Activated CD4-positive, alpha-beta T cell treated with anti-CD3 and anti-CD28 coated beads, Interleukin-2, amount 10 ng/mL, durations not matched to agents 24 days and 14 days (primary cell): ENCODE measurements at regions of chr1 and their contacts with region 1.

Region 1: DNA sequence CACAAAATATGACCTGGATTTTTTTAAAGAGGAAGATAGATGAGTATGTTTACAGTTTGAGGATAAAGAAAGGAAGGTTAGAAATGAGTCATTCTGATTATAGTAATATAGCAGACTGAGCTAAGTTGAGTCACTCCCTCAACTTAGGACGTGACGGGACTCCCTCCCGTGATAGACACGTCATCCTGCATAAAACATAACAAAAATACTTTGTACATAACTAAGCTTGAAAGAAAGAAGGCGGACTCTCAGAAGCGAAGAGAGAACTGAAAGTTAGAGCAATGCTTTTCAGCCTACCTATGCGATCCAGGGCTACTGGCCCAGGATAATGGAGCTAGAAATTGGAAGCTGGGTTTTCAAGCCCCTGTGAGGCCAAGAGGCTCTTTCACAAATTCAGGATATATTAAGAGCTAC is 53.0 kb upstream of the DESI2 start:
- DNase-seq: peak; percentile 83
- H3K4me3 Mint-ChIP-seq: peak overlapping the region; percentile 70
- H3K27ac Mint-ChIP-seq: peak overlapping the region; percentile 92
- H3K4me1 Mint-ChIP-seq: peaks cover 20% of the 10 kb centered on the region
- H3K27me3 Mint-ChIP-seq: peaks cover 3% of the 10 kb centered on the region

Region 2: DNA sequence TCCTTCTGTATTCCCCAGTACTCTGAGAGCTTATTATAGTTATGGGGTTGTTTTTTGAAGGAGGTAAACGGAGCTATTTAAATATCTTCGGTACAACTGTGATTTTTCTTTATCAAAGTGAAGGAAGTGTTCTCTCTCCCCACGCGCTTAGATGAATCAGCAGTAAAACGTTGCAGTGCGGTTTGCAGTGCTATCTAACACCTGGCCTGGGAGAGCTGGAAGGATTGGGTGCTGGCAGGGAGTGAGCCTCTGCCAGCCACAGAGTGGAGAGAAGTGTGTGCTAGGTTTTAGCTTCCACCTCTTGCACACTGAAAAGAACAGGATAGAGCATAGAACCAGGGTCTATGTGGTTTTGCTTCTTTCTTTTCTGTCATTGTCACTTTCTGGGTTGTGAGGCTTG is 1178.2 kb before region 1 on chr1:
- intact Hi-C with region 1: loop called (anchors 2 kb)
- DNase-seq: peak; percentile 89
- H3K4me3 Mint-ChIP-seq: peak overlapping the region; percentile 70
- H3K27ac Mint-ChIP-seq: peak overlapping the region; percentile 55
- H3K4me1 Mint-ChIP-seq: peaks cover 38% of the 10 kb centered on the region
- H3K27me3 Mint-ChIP-seq: no peaks in the 10 kb centered on the region

Region 3: GRCh38 chr1:244451951-244452795 is 147.8 kb before region 1 on chr1:
- intact Hi-C with region 1: loop called (anchors 5 kb)
- DNase-seq: peak; percentile 100
- H3K4me3 Mint-ChIP-seq: peak overlapping the region; percentile 92
- H3K27ac Mint-ChIP-seq: peak overlapping the region; percentile 96
- H3K4me1 Mint-ChIP-seq: peaks cover 29% of the 10 kb centered on the region
- H3K27me3 Mint-ChIP-seq: no peaks in the 10 kb centered on the region

Region 4: DNA sequence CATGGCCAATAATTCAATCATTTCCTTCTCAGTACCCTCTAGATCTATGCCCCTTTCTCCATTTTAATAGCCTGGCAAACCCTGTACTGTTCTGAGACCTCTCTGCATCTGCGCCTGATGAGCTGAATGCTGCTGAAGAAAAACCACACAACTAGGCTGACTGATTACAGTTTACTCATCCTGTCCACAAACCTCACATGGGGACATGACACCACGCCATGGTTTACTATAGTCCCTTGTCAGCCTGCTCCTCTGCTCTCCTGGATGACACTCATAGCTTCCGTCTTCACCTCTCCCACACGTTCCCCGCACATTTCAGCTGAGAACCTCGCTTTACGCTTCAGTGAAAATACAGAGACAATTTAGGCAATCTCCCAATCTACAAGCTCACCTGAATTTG is 112.7 kb after region 1 on chr1:
- intact Hi-C with region 1: loop called (anchors 5 kb)
- DNase-seq: no peak
- H3K4me3 Mint-ChIP-seq: no peak overlapping the region
- H3K27ac Mint-ChIP-seq: no peak overlapping the region
- H3K4me1 Mint-ChIP-seq: peaks cover 8% of the 10 kb centered on the region
- H3K27me3 Mint-ChIP-seq: peaks cover 3% of the 10 kb centered on the region

Region 5: DNA sequence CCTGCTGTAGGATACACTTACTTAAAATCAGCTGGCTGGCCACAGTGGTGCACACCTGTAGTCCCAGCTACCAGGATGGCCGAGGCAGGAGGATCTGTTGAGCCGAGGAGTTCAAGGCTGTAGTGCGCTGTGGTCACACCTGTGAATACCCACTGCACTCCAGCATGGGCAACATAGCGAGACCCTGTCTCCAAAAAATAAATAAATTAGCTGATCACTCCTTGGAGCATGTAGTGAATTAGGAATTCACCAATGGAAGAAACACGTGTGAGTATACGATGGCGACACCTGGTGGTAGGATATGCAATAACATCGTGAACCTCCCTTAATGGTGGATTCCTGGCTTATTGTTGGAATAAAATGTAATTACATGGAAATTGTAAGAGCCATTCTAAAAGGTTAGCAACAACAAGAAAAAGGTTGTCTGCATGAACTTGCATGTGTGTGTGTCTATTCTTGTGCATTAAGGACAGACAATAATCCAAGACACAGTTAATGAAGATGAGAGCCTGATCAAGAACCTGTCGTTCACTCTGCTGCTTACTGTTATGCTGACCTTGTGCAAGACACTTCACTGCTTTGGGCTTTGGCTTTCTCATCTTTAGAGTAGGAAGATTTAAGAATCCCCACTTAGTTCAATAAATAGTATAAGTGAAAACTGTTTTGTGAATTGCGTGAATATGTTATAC is 196.9 kb after region 1 on chr1:
- intact Hi-C with region 1: loop called (anchors 1 kb)
- DNase-seq: peak; percentile 85
- H3K4me3 Mint-ChIP-seq: no peak overlapping the region
- H3K27ac Mint-ChIP-seq: no peak overlapping the region
- H3K4me1 Mint-ChIP-seq: no peaks in the 10 kb centered on the region
- H3K27me3 Mint-ChIP-seq: peaks cover 4% of the 10 kb centered on the region

Region 6: GRCh38 chr1:244970661-244971551 is 371.0 kb after region 1 on chr1:
- intact Hi-C with region 1: loop called (anchors 5 kb)
- DNase-seq: peak; percentile 97
- H3K4me3 Mint-ChIP-seq: peak overlapping the region; percentile 94
- H3K27ac Mint-ChIP-seq: peak overlapping the region; percentile 99
- H3K4me1 Mint-ChIP-seq: peaks cover 17% of the 10 kb centered on the region
- H3K27me3 Mint-ChIP-seq: peaks cover 3% of the 10 kb centered on the region

Region 7: DNA sequence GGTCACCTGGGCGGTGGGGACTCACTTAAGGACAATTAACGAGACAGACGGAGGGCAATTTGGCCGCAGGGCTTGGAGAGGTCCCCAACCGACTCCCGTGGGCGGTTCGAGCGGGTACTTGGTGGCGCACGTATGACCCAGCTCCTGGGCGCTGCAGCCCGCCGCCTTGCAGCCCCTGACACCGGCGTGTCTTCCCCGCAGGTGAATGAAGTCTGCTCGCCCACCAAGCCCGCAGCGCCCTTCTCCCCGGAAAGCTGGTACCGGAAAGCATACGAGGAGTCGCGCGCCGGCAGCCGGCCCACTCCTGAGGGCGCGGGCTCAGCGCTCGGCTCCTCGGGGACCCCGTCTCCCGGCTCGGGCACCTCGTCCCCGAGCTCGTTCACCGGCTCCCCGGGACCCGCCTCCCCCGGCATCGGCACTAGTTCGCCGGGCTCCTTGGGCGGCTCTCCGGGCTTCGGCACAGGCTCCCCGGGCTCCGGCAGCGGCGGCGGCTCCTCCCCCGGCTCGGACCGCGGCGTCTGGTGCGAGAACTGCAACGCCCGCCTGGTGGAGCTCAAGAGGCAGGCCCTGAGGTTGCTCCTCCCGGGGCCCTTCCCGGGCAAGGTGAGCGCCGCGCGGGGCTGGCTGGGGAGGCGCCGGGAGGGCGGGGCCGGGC is 556.3 kb after region 1 on chr1:
- intact Hi-C with region 1: loop called (anchors 10 kb)
- DNase-seq: peak; percentile 95
- H3K4me3 Mint-ChIP-seq: peak overlapping the region; percentile 84
- H3K27ac Mint-ChIP-seq: no peak overlapping the region
- H3K4me1 Mint-ChIP-seq: peaks cover 13% of the 10 kb centered on the region
- H3K27me3 Mint-ChIP-seq: peaks cover 65% of the 10 kb centered on the region